Activated CD4-positive, alpha-beta memory T cell treated with anti-CD3 and anti-CD28 coated beads for 36 hours (primary cell): ENCODE measurements at regions of chr1 and their contacts with region 1.

Region 1: DNA sequence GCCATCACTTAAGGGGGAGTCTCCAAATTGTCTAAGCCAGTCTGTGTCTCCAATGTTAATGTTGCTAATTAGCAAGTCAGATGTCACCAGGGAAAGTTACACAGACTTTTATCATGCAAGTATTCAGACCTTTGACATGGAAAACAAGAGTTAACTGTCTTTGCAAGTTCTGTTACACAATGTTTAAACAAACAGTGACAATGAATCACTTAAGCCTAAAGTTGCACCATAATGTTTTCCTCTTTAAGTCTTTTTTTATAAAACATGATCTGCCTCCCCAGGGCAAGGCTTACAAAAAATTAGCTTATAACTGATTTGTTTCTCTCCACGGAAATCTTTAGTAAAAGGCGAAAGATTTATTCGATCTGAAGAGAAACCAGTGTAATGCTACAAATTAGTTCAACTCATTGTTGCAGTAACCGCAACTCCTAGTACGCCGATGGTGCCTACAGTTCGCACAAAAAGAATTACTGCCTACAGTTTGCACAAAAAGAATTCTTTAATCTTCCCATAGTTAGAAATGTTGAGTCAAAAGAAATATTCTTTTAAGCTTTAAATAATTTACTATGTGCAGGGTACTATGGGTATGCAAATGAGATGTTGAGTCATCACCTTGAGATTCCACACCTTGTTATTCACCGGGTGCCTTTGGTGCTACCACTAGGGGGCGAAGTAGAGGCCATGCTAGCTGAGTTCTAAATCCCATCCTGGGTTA is 45.3 kb downstream of the HHAT start:
- DNase-seq: peak; percentile 88
- H3K4me3 Mint-ChIP-seq: no peak overlapping the region
- H3K27ac Mint-ChIP-seq: peak overlapping the region; percentile 89
- H3K4me1 Mint-ChIP-seq: peaks cover 34% of the 10 kb centered on the region
- H3K27me3 Mint-ChIP-seq: no peaks in the 10 kb centered on the region

Region 2: GRCh38 chr1:210342986-210343780 is 30.9 kb before region 1 on chr1:
- CTCF ChIA-PET with region 1: interaction called, 29 read pairs
- POLR2A ChIA-PET with region 1: interaction called, 27 read pairs
- intact Hi-C with region 1: loop called (anchors 1 kb)
- DNase-seq: no peak
- H3K4me3 Mint-ChIP-seq: no peak overlapping the region
- H3K27ac Mint-ChIP-seq: no peak overlapping the region
- H3K4me1 Mint-ChIP-seq: peaks cover 36% of the 10 kb centered on the region
- H3K27me3 Mint-ChIP-seq: no peaks in the 10 kb centered on the region

Region 3: DNA sequence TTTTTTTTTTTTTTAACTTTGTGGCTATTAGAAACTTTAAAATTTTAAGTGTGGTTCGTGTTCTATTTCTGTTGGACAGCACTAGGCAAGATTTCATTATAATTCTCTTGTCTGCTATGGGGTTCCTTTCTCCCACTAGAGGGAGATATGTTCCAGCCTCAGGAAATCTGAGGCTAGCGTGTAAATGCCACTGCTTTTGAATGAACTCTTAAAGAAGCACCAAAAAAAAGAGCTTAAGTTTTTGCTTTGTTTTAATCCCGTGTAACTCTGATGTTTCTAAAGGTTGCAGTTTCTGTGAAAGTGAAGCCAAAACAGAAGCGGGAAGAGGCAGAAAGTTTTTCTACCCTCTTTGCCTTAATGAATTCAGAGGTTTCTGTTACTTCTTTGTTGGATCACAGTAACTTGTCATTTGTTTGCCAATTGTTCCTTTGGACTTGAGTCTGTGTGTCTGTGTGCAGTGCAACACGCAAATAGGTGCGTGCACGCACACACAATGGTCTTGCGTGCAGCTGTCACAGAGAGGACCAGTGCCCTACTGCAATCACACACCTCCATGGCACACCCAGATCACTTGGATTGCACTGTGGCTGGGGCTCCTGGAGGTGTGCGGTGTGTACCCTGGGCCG is 13.1 kb before region 1 on chr1:
- CTCF ChIA-PET with region 1: interaction called, 49 read pairs
- POLR2A ChIA-PET with region 1: interaction called, 12 read pairs
- intact Hi-C with region 1: no loop called
- DNase-seq: no peak
- H3K4me3 Mint-ChIP-seq: no peak overlapping the region
- H3K27ac Mint-ChIP-seq: no peak overlapping the region
- H3K4me1 Mint-ChIP-seq: peaks cover 10% of the 10 kb centered on the region
- H3K27me3 Mint-ChIP-seq: no peaks in the 10 kb centered on the region

Region 4: GRCh38 chr1:210384630-210385029 is 10.6 kb after region 1 on chr1:
- CTCF ChIA-PET with region 1: interaction called, 18 read pairs
- POLR2A ChIA-PET with region 1: interaction called, 7 read pairs
- intact Hi-C with region 1: no loop called
- DNase-seq: no peak
- H3K4me3 Mint-ChIP-seq: no peak overlapping the region
- H3K27ac Mint-ChIP-seq: no peak overlapping the region
- H3K4me1 Mint-ChIP-seq: no peaks in the 10 kb centered on the region
- H3K27me3 Mint-ChIP-seq: no peaks in the 10 kb centered on the region

Region 5: DNA sequence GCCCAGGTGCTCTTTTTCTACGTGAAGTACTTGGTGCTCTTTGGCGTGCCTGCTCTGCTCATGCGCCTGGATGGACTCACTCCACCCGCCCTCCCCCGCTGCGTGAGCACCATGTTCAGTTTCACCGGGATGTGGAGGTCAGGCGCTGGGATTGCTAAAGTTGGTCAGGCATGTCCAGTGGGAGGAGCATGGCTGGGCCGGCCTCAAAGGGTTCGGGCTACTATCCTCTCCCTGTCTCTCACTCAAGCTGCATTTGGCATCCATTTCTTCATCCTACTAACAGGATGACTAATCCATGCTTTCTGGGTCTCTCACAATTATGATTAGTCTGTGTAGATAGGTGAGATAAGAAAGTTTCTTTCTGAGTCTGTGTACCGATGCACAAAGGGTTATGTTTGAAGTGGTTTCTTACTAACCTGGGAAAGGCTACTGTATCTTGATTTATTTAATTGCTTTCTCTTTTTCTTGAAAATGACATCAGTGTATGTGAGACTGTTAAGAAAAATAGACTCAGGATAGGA is 90.5 kb after region 1 on chr1:
- CTCF ChIA-PET with region 1: interaction called, 3 read pairs
- POLR2A ChIA-PET with region 1: no interaction called
- intact Hi-C with region 1: loop called (anchors 1 kb)
- DNase-seq: peak; percentile 44
- H3K4me3 Mint-ChIP-seq: no peak overlapping the region
- H3K27ac Mint-ChIP-seq: no peak overlapping the region
- H3K4me1 Mint-ChIP-seq: peaks cover 24% of the 10 kb centered on the region
- H3K27me3 Mint-ChIP-seq: peaks cover 2% of the 10 kb centered on the region

Region 6: GRCh38 chr1:211258756-211259637 is 885.0 kb after region 1 on chr1 and contains the start of gene RCOR3:
- CTCF ChIA-PET with region 1: no interaction called
- POLR2A ChIA-PET with region 1: no interaction called
- intact Hi-C with region 1: loop called (anchors 1 kb)
- DNase-seq: peak; percentile 95
- H3K4me3 Mint-ChIP-seq: peak within 1 kb of the TSS; percentile 83
- H3K27ac Mint-ChIP-seq: peak within 1 kb of the TSS; percentile 93
- H3K4me1 Mint-ChIP-seq: peaks cover 16% of the 10 kb centered on the region
- H3K27me3 Mint-ChIP-seq: no peaks in the 10 kb centered on the region
- total RNA-seq, gene RCOR3: 30.2 to 32.7 TPM